ENCODE measurements at regions of chr4 and their contacts with region 1.

Region 1: DNA sequence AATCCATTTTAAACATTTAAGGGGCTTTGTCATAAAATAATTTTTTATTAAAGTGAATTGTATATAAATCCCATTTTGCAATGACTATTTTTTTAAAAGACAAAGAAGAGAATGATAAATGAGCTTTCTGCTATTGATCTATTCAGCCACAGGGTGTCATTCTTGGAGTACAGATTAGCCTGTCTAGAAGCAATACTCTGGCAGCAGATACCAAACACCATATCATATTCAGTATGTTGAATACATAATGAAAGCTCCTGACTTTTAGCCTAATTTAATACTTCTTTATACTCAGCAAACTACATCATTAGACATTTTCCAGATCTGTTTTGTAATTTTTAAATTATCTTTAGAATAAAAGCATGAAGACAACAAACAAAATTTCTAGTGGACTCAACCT is 496.3 kb downstream of the PDGFC start:
- DNase-seq: peak; percentile 70
- H3K4me3 Mint-ChIP-seq: no peak overlapping the region
- H3K27ac Mint-ChIP-seq: peak overlapping the region; percentile 88
- H3K4me1 Mint-ChIP-seq: peaks cover 11% of the 10 kb centered on the region
- H3K27me3 Mint-ChIP-seq: no peaks in the 10 kb centered on the region
- CTCF ChIP-seq: peak; percentile 65

Region 2: GRCh38 chr4:155953151-155954114 is 521.9 kb before region 1 on chr4 and contains the start of gene CTSO:
- CTCF ChIA-PET with region 1: interaction called, 3 read pairs
- POLR2A ChIA-PET with region 1: interaction called, 3 read pairs
- intact Hi-C with region 1: loop called (anchors 10 kb)
- DNase-seq: peak; percentile 85
- H3K4me3 Mint-ChIP-seq: peak within 1 kb of the TSS; percentile 99
- H3K27ac Mint-ChIP-seq: peak within 1 kb of the TSS; percentile 99
- H3K4me1 Mint-ChIP-seq: peaks cover 8% of the 10 kb centered on the region
- H3K27me3 Mint-ChIP-seq: no peaks in the 10 kb centered on the region
- CTCF ChIP-seq: peak; percentile 38
- total RNA-seq, gene CTSO: 2.3 and 5.2 TPM in 2 replicates

Region 3: DNA sequence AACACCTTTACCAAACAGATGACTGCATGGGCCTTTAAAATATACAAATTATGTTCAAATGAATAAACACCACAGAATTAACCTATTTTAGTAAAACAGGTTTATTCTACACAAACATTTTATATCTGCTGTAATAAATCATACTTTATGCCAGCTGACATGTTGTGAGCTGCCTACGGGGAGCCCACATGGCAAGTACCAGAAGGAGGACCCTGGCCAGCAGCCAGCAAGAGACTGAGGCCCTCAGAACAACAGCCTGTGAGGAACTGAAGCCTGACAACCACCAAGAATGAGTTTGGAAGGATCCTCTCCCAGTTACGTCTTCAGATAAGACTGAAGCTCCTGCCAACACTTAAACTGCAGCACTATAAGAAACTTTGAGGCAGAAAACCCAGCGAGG is 119.3 kb after region 1 on chr4:
- CTCF ChIA-PET with region 1: no interaction called
- POLR2A ChIA-PET with region 1: no interaction called
- intact Hi-C with region 1: loop called (anchors 5 kb)
- DNase-seq: peak; percentile 42
- H3K4me3 Mint-ChIP-seq: no peak overlapping the region
- H3K27ac Mint-ChIP-seq: peak overlapping the region; percentile 67
- H3K4me1 Mint-ChIP-seq: peaks cover 11% of the 10 kb centered on the region
- H3K27me3 Mint-ChIP-seq: no peaks in the 10 kb centered on the region
- CTCF ChIP-seq: no peak

Region 4: DNA sequence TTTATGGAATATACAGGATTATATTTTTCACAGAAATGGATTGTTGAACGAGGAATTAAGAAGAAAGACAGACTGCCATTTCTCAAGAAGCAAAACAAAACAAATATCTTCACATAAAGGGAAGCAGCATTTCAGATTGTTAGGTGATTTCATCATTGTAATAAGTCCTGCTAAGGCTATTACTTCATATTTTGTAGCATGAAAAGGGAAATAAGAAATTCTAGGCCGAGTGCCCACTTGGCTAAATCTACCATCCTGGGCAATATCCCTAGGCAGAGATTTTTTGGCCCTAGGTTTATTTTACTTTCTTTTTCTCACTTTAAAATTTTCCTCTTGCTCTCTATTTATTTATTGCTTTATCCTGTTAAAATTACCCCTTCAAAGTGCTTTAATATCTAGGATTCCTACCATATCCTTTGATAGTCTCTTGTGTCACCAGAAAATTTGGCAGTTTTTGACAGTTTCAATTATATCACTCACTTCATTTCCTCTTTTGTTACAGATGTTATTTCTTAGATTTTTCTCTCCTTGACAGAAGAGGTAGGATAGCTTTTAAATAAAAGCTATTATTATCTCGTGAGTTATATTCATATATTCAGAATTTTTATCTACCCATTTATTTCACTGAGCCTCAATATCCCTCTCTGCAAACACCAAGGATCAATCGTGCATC is 354.0 kb after region 1 on chr4:
- CTCF ChIA-PET with region 1: no interaction called
- POLR2A ChIA-PET with region 1: interaction called, 3 read pairs
- intact Hi-C with region 1: loop called (anchors 5 kb)
- DNase-seq: peak; percentile 81
- H3K4me3 Mint-ChIP-seq: peak overlapping the region; percentile 67
- H3K27ac Mint-ChIP-seq: peak overlapping the region; percentile 94
- H3K4me1 Mint-ChIP-seq: peaks cover 35% of the 10 kb centered on the region
- H3K27me3 Mint-ChIP-seq: no peaks in the 10 kb centered on the region
- CTCF ChIP-seq: no peak

Region 5: DNA sequence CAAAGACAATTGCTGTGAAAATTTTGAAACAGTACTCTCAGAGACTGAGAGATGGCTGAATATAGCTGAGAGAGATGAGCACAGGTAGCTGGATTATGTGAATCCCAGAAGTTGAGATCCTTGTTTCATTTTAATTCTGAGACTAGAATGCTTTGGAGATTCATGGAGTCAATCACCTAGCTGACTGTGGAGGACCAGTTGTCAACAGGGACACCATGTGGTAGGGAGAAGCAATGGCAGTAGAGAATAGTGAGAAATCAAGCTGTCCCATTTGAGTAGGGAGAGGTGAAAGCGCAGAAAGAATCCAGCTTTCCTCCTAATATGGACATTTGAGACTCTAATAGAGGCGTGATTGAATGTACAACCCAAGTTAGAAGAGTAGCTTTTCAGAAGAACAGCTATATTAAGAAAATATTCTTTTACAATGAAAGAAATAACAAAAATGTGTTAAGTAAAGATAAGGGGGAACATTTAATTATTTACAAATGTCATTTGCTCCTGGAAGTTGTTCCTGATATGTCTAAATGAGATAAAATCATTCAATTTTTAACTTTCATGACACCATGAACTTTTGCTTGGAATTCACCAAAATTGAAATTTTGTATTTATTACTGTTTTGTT is 570.3 kb after region 1 on chr4:
- CTCF ChIA-PET with region 1: interaction called, 51 read pairs
- POLR2A ChIA-PET with region 1: interaction called, 7 read pairs
- intact Hi-C with region 1: loop called (anchors 1 kb)
- DNase-seq: peak; percentile 84
- H3K4me3 Mint-ChIP-seq: no peak overlapping the region
- H3K27ac Mint-ChIP-seq: peak overlapping the region; percentile 55
- H3K4me1 Mint-ChIP-seq: peaks cover 22% of the 10 kb centered on the region
- H3K27me3 Mint-ChIP-seq: no peaks in the 10 kb centered on the region
- CTCF ChIP-seq: peak; percentile 89

Region 6: DNA sequence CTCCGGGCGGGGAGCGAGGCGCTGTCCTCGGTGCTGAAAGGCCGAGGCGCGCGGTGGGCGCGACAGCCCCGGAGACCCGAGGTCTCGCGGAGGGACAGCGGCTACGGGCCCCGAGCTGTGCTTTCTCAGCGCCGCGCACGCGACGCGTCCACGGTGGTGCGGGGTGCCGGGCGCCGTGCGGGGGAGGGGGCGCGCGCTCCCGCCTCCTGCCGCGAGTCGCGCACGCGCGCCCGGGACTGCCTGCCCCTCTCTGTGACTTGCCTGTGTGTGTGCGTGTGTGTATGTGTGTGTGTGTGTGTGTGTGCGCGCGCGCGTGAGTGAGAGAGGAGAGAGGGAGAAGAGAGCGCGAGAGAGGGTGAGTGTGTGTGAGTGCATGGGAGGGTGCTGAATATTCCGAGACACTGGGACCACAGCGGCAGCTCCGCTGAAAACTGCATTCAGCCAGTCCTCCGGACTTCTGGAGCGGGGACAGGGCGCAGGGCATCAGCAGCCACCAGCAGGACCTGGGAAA is 745.1 kb after region 1 on chr4 and contains the start of gene GRIA2:
- CTCF ChIA-PET with region 1: interaction called, 9 read pairs
- POLR2A ChIA-PET with region 1: no interaction called
- intact Hi-C with region 1: loop called (anchors 5 kb)
- DNase-seq: no peak
- H3K4me3 Mint-ChIP-seq: peak within 1 kb of the TSS; percentile 61
- H3K27ac Mint-ChIP-seq: no peak within 1 kb of the TSS
- H3K4me1 Mint-ChIP-seq: peaks cover 5% of the 10 kb centered on the region
- H3K27me3 Mint-ChIP-seq: peaks cover 32% of the 10 kb centered on the region
- CTCF ChIP-seq: no peak
- total RNA-seq, gene GRIA2: not detected in 2 replicates